Posterior vena cava (tissue), 2 donors: ENCODE measurements at regions of chr2 and their contacts with region 1.

Region 1: GRCh38 chr2:132782176-132782783 is 112.3 kb upstream of the LYPD1 start:
- DNase-seq: no peak

Region 2: GRCh38 chr2:131588152-131588873 is 1194.0 kb before region 1 on chr2:
- intact Hi-C with region 1: no loop called
- DNase-seq: no peak

Region 3: DNA sequence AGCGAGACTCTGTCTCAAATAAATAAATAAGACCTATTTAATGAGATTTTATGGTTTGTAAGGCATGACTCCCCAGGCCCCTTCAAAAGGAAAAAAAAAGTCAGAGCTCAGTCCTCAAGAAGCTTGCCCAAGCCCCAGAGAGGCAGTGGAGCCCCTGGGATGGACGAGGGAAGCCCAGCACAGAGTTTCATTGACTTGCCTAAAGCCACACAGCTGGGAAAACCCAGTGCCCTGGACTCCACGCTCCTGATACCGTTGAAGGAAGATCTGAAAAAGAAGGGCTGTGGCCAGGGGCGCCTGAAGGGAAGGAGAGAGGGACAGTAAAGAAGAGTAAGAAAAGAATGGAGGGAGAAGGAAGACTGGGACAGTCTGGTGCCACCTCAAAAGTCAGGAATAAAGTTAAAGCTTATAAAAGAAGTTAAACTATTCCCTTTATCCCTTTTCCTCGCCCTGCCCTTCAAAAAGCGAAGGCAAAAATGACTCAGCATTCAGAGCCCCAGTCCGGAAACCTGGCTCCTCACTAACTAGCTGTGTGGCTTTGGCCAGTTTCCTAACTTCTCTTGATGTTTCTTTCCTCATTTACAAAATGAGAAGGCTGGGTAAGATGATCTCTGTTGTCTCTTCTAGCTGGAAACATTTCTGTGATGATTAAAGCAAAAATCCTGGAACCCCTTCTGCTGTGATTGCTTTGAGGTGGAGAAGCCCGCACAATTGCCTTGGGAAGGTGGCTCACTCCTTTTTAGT is 159.0 kb before region 1 on chr2:
- intact Hi-C with region 1: no loop called
- DNase-seq: no peak

Region 4: GRCh38 chr2:132715386-132716351 is 66.6 kb before region 1 on chr2:
- intact Hi-C with region 1: loop called in 1 of 2 experiments (anchors 1 kb)
- DNase-seq: no peak